CD4-positive, alpha-beta memory T cell (primary cell): ENCODE measurements at regions of chr6 and their contacts with region 1.

Region 1: GRCh38 chr6:106085984-106086813 is at the start of gene PRDM1:
- DNase-seq: peak; percentile 78 to 93 (median 80)
- H3K4me3 ChIP-seq: peak within 1 kb of the TSS; percentile 58 to 61
- H3K4me3 Mint-ChIP-seq: peak within 1 kb of the TSS; percentile 89 to 97 (median 94)
- H3K27ac ChIP-seq: peak within 1 kb of the TSS; percentile 57
- H3K27ac Mint-ChIP-seq: peak within 1 kb of the TSS; percentile 81 to 94 (median 91)
- H3K4me1 ChIP-seq: peaks cover 84% of the 10 kb centered on the region
- H3K4me1 Mint-ChIP-seq: peaks cover 66 to 95% (median 82%) of the 10 kb centered on the region in 4 donors
- H3K27me3 ChIP-seq: no peaks in the 10 kb centered on the region
- H3K27me3 Mint-ChIP-seq: peaks cover 0 to 2% of the 10 kb centered on the region in 2 donors
- total RNA-seq, gene PRDM1: 33.4 to 34.0 TPM

Region 2: DNA sequence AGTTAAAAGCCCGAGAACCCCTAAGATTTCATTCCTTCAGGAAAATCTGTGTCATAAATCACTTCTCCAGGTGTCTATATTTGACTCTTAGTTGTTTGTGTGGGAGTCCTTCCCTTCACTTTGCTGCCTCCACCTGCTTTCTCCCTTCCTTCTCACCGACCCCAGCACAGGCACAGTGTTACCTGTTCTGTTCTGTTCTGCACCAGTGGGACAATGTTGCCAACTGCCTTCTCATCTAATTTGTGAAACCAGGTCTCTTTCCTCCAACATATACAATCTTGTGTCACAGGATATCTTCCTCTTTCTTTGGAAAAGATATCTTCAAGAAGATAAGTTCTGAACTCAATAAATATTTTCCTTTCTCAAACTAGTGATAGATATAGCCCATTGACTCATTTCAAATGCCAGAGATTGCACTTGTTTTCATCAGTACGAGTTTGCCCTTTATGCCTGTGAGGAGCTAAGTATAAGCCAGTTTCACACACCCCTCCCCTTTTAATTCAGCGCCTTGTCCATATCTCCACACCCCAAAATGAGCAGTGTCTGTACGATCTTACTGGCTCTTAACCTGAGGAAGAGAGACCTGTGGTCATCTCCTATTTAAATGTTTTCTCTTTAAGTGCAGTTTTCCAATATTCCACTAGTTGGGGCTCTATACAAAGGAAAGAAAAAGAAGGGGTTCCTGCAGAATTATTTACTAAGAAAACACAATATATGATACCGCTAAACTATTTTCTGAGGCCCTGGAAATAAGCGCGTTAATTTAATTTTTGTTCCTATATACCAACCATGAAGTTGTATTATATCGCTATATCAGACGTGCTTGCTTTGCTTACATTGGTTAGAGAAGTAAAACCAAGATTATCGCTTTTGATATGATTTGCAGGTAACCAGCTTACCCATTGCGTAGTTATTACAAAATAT is 601.7 kb before region 1 on chr6:
- CTCF ChIA-PET with region 1: interaction called, 6 read pairs
- POLR2A ChIA-PET with region 1: no interaction called
- intact Hi-C with region 1: loop called (anchors 1 kb)
- DNase-seq: peak in 4 of 5 donors; percentile 34 to 55 (median 44)
- H3K4me3 ChIP-seq: no peak overlapping the region
- H3K4me3 Mint-ChIP-seq: peak overlapping the region; percentile 20 to 71 (median 62)
- H3K27ac ChIP-seq: no peak overlapping the region
- H3K27ac Mint-ChIP-seq: peak overlapping the region in 6 of 7 donors; percentile 7 to 76 (median 60)
- H3K4me1 ChIP-seq: peaks cover 32% of the 10 kb centered on the region
- H3K4me1 Mint-ChIP-seq: peaks cover 13 to 34% (median 18%) of the 10 kb centered on the region in 4 donors
- H3K27me3 ChIP-seq: no peaks in the 10 kb centered on the region
- H3K27me3 Mint-ChIP-seq: no peaks in the 10 kb centered on the region

Region 3: GRCh38 chr6:106056060-106056745 is 30.0 kb before region 1 on chr6:
- CTCF ChIA-PET with region 1: interaction called, 9 read pairs
- POLR2A ChIA-PET with region 1: interaction called, 12 read pairs
- intact Hi-C with region 1: no loop called
- DNase-seq: peak; percentile 42 to 65 (median 59)
- H3K4me3 ChIP-seq: peak overlapping the region in 1 of 2 donors; percentile 46
- H3K4me3 Mint-ChIP-seq: peak overlapping the region; percentile 37 to 81 (median 70)
- H3K27ac ChIP-seq: no peak overlapping the region
- H3K27ac Mint-ChIP-seq: peak overlapping the region; percentile 6 to 86 (median 33)
- H3K4me1 ChIP-seq: peaks cover 33% of the 10 kb centered on the region
- H3K4me1 Mint-ChIP-seq: peaks cover 17 to 32% (median 27%) of the 10 kb centered on the region in 4 donors
- H3K27me3 ChIP-seq: no peaks in the 10 kb centered on the region
- H3K27me3 Mint-ChIP-seq: no peaks in the 10 kb centered on the region

Region 4: GRCh38 chr6:106103728-106104109 is 17.5 kb after region 1 on chr6:
- CTCF ChIA-PET with region 1: interaction called, 15 read pairs
- POLR2A ChIA-PET with region 1: interaction called, 151 read pairs
- intact Hi-C with region 1: loop called (anchors 2 kb)
- DNase-seq: peak; percentile 50 to 86 (median 51)
- H3K4me3 ChIP-seq: peak overlapping the region; percentile 86 to 89
- H3K4me3 Mint-ChIP-seq: peak overlapping the region; percentile 95 to 99 (median 97)
- H3K27ac ChIP-seq: peak overlapping the region; percentile 69
- H3K27ac Mint-ChIP-seq: peak overlapping the region; percentile 91 to 98 (median 95)
- H3K4me1 ChIP-seq: peaks cover 75% of the 10 kb centered on the region
- H3K4me1 Mint-ChIP-seq: peaks cover 50 to 86% (median 68%) of the 10 kb centered on the region in 4 donors
- H3K27me3 ChIP-seq: no peaks in the 10 kb centered on the region
- H3K27me3 Mint-ChIP-seq: no peaks in the 10 kb centered on the region

Region 5: GRCh38 chr6:106163446-106163965 is 77.3 kb after region 1 on chr6:
- CTCF ChIA-PET with region 1: interaction called, 11 read pairs
- POLR2A ChIA-PET with region 1: interaction called, 10 read pairs
- intact Hi-C with region 1: no loop called
- DNase-seq: peak; percentile 44 to 73 (median 51)
- H3K4me3 ChIP-seq: peak overlapping the region in 1 of 2 donors; percentile 27
- H3K4me3 Mint-ChIP-seq: peak overlapping the region; percentile 46 to 78 (median 68)
- H3K27ac ChIP-seq: peak overlapping the region; percentile 57
- H3K27ac Mint-ChIP-seq: peak overlapping the region; percentile 74 to 98 (median 93)
- H3K4me1 ChIP-seq: peaks cover 32% of the 10 kb centered on the region
- H3K4me1 Mint-ChIP-seq: peaks cover 30 to 56% (median 42%) of the 10 kb centered on the region in 4 donors
- H3K27me3 ChIP-seq: no peaks in the 10 kb centered on the region
- H3K27me3 Mint-ChIP-seq: no peaks in the 10 kb centered on the region

Region 6: GRCh38 chr6:106444777-106445507 is 358.7 kb after region 1 on chr6:
- CTCF ChIA-PET with region 1: interaction called, 12 read pairs
- POLR2A ChIA-PET with region 1: no interaction called
- intact Hi-C with region 1: no loop called
- DNase-seq: peak in 4 of 5 donors; percentile 68 to 77 (median 72)
- H3K4me3 ChIP-seq: no peak overlapping the region
- H3K4me3 Mint-ChIP-seq: no peak overlapping the region
- H3K27ac ChIP-seq: no peak overlapping the region
- H3K27ac Mint-ChIP-seq: no peak overlapping the region
- H3K4me1 ChIP-seq: peaks cover 5% of the 10 kb centered on the region
- H3K4me1 Mint-ChIP-seq: peaks cover 4 to 13% (median 11%) of the 10 kb centered on the region in 4 donors
- H3K27me3 ChIP-seq: no peaks in the 10 kb centered on the region
- H3K27me3 Mint-ChIP-seq: peaks cover 11 to 19% of the 10 kb centered on the region in 2 donors

Region 7: GRCh38 chr6:106731144-106731842 is 645.1 kb after region 1 on chr6:
- CTCF ChIA-PET with region 1: no interaction called
- POLR2A ChIA-PET with region 1: no interaction called
- intact Hi-C with region 1: no loop called
- DNase-seq: no peak
- H3K4me3 ChIP-seq: no peak overlapping the region
- H3K4me3 Mint-ChIP-seq: no peak overlapping the region
- H3K27ac ChIP-seq: no peak overlapping the region
- H3K27ac Mint-ChIP-seq: no peak overlapping the region
- H3K4me1 ChIP-seq: no peaks in the 10 kb centered on the region
- H3K4me1 Mint-ChIP-seq: no peaks in the 10 kb centered on the region
- H3K27me3 ChIP-seq: no peaks in the 10 kb centered on the region
- H3K27me3 Mint-ChIP-seq: peaks cover 8 to 9% of the 10 kb centered on the region in 2 donors